Posterior cingulate gyrus (tissue), 11 donors: ENCODE measurements at regions of chr2 and their contacts with region 1.

Region 1: DNA sequence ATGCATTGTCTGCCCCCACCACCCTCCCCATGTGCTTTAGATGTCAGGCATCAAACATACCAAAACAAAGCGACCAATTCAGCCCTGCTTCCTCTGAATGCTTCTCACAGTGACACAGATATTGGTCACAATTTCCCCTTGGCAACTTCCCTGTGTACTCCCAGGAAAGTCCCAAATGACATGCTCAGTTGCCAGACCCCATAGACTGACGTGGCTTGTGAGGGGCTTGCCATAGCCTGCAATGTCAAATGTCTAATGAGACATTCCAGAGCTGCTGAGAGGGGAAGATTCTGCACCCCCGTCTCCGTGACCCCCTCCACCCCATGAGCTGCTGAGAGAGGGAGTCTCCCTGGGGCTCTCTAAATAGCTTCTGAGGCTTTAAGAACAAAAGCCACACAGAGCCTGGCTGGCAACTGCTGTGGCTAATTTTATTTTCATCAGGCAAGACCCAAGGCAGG is 47.3 kb downstream of the RFTN2 start:
- DNase-seq: peak in 7 of 10 donors; percentile 22 to 87 (median 29)

Region 2: GRCh38 chr2:197560146-197560665 is 67.9 kb before region 1 on chr2:
- intact Hi-C with region 1: loop called (anchors 1 kb)
- DNase-seq: no peak

Region 3: DNA sequence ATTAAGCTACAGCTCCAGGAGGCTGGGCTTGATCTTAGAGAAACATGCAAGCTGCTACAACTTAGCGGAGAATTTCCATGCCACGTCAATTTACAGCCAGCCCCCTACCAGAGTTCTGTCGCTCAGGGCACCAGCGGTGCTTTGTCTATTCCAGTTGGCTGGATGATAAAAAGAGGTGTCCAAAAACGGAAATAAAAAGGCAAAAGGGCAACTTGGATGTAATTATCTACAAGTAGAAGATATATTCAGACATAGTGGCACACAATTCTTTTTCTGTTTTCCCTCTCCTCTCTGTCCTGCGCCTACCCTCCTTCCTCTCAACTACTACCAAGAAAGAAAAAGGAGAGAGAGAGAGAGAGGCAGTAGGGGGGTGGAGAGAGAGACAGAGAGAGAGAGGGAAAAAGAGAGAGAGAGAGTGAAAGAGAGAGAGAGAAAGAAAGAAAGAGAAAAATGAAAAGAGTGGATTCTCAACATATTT is 47.7 kb after region 1 on chr2:
- intact Hi-C with region 1: loop called (anchors 10 kb)
- DNase-seq: peak in 5 of 10 donors; percentile 5 to 84 (median 29)

Region 4: DNA sequence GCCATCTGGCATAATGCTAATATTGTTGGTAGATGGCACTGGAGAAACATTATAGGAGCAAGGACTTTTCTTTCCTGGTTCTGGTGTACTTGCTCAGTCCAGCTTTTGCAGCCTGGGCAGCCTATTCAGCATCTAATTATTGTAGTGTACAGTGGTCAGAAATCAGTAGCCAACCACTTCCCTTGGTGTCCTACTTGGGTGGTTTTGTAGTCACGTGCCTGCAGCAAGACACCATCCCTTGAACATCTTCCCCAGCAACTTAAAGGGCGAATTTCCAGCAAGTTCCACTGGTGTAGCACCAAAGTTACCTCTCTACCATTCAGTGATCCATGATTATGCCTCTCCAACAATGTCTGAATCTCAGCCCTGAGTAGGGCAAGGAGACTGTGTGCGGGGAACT is 1272.1 kb after region 1 on chr2:
- intact Hi-C with region 1: no loop called
- DNase-seq: no peak